Caco-2 (cell line): ENCODE measurements at regions of chr6 and their contacts with region 1.

Region 1: DNA sequence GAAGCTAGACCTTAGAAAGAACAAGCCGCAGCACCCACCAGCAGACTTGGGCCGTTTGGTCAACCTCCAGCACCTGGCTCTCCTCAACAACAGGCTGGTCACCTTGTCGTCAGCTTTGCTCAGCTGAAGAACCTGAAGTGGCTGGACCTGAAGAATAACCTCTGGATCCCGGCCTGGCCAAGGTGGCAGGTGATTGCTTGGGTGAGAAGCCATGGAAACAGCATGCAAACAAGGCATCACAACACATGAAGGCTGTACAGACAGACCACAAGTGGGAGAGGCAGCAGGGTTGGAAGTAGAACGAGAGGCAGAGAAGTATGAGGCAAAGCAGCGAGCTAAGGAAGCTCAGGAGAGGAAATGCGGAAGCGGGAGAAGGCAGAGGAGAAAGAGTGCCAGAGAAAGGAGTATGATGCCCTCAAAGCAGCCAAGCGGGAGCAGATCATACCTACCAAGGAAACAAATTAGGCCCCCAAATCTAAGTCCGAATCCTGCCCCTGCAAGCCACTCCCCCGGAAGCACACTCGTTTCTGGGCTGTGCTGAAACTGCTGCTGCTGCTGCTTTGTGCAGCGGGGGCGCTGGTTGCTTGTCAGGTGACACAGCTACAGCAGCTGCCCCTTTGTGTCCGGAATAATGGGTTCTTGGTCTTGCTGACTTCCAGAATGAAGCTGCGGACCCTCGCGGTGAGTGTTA is 121.6 kb upstream of the LGSN start:
- DNase-seq: peak; percentile 84 to 85
- H3K4me3 ChIP-seq: peak overlapping the region; percentile 81
- H3K4me3 Mint-ChIP-seq: peak overlapping the region; percentile 100
- H3K27ac Mint-ChIP-seq: peak overlapping the region; percentile 98
- H3K4me1 ChIP-seq: peaks cover 6% of the 10 kb centered on the region; the same call in 1 of the 2 replicates
- H3K4me1 Mint-ChIP-seq: peaks cover 10% of the 10 kb centered on the region
- H3K27me3 ChIP-seq: no peaks in the 10 kb centered on the region
- H3K27me3 Mint-ChIP-seq: no peaks in the 10 kb centered on the region
- CTCF ChIP-seq: peak; percentile 27 to 51

Region 2: GRCh38 chr6:63263444-63263843 is 178.0 kb before region 1 on chr6:
- CTCF ChIA-PET with region 1: no interaction called
- POLR2A ChIA-PET with region 1: no interaction called
- intact Hi-C with region 1: no loop called
- DNase-seq: no peak
- H3K4me3 ChIP-seq: no peak overlapping the region
- H3K4me3 Mint-ChIP-seq: no peak overlapping the region
- H3K27ac Mint-ChIP-seq: no peak overlapping the region
- H3K4me1 ChIP-seq: no peaks in the 10 kb centered on the region
- H3K4me1 Mint-ChIP-seq: no peaks in the 10 kb centered on the region
- H3K27me3 ChIP-seq: no peaks in the 10 kb centered on the region
- H3K27me3 Mint-ChIP-seq: no peaks in the 10 kb centered on the region
- CTCF ChIP-seq: no peak

Region 3: GRCh38 chr6:63352587-63353285 is 88.7 kb before region 1 on chr6:
- CTCF ChIA-PET with region 1: interaction called, 28 read pairs
- POLR2A ChIA-PET with region 1: interaction called, 11 read pairs
- intact Hi-C with region 1: loop called (anchors 1 kb)
- DNase-seq: peak; percentile 50 to 62
- H3K4me3 ChIP-seq: no peak overlapping the region
- H3K4me3 Mint-ChIP-seq: no peak overlapping the region
- H3K27ac Mint-ChIP-seq: no peak overlapping the region
- H3K4me1 ChIP-seq: peaks cover 37% of the 10 kb centered on the region
- H3K4me1 Mint-ChIP-seq: peaks cover 32% of the 10 kb centered on the region
- H3K27me3 ChIP-seq: no peaks in the 10 kb centered on the region
- H3K27me3 Mint-ChIP-seq: no peaks in the 10 kb centered on the region
- CTCF ChIP-seq: peak; percentile 44 to 73

Region 4: GRCh38 chr6:63418741-63419140 is 22.7 kb before region 1 on chr6:
- CTCF ChIA-PET with region 1: no interaction called
- POLR2A ChIA-PET with region 1: no interaction called
- intact Hi-C with region 1: no loop called
- DNase-seq: no peak
- H3K4me3 ChIP-seq: no peak overlapping the region
- H3K4me3 Mint-ChIP-seq: no peak overlapping the region
- H3K27ac Mint-ChIP-seq: no peak overlapping the region
- H3K4me1 ChIP-seq: no peaks in the 10 kb centered on the region
- H3K4me1 Mint-ChIP-seq: no peaks in the 10 kb centered on the region
- H3K27me3 ChIP-seq: no peaks in the 10 kb centered on the region
- H3K27me3 Mint-ChIP-seq: no peaks in the 10 kb centered on the region
- CTCF ChIP-seq: no peak

Region 5: DNA sequence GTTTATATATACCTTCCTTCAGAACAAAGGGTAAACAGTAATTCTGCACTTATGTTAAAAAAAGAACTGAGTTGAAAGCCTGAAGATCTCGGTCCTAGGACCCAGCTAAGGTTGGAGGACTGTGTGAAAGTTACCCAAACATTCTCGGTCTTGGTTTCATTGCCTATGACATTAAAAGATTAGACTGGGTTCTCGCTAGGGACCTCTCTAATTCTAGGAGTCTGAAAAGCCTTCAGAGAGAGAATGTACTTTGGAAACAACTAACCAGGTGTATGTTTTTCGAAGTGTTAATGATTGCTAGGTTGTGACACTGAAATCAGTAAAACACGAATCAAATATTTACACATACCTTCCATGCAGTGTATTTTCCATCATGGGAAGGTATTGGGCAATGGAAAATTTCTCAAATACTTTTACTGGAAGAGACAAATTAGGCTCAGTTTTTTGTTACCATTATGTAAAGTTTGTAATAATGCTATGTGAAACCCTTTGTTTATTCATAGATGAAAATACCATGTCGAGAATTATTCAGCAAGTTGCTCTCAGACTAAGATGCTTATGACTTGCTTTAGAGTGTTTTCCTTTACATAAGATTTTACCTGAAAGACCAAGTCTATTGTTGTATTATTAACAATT is 17.2 kb after region 1 on chr6:
- CTCF ChIA-PET with region 1: no interaction called
- POLR2A ChIA-PET with region 1: interaction called, 9 read pairs
- intact Hi-C with region 1: loop called (anchors 1 kb)
- DNase-seq: peak in 1 of 2 experiments; percentile 70
- H3K4me3 ChIP-seq: no peak overlapping the region
- H3K4me3 Mint-ChIP-seq: peak overlapping the region; percentile 52
- H3K27ac Mint-ChIP-seq: peak overlapping the region; percentile 66
- H3K4me1 ChIP-seq: peaks cover 36% of the 10 kb centered on the region
- H3K4me1 Mint-ChIP-seq: peaks cover 22% of the 10 kb centered on the region
- H3K27me3 ChIP-seq: no peaks in the 10 kb centered on the region
- H3K27me3 Mint-ChIP-seq: no peaks in the 10 kb centered on the region
- CTCF ChIP-seq: no peak

Region 6: DNA sequence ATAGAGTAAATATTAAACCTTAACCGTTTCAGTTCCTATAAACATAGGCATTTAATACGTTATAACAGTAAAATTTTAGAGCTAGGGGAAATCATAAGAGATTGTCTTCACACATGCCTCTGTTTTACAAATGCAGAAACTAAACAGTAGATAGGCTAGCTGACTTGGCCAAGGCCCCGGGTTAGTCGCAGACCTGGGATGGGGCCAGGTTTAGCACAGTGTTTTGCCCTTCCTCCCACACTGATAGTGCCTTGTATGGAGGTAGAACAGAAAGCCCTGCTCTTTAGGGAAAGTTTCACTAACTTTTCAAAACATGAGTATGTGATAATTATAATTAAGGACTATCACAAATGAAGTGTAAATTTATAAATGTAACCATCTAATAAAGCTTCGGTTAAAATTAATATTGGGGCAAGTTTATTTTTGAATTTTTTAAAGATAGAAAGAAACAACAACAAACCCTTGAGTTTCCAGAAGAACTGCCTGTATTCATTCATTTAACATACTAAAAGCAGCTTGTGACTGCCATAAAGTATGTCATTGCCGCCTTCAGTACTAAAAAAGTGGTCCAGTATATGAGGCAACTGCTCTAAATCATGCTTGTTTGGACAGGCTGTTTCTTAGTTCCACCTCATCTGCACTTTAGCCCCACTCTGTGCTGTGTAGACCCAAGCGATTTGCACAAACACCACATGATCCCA is 68.4 kb after region 1 on chr6:
- CTCF ChIA-PET with region 1: interaction called, 4 read pairs
- POLR2A ChIA-PET with region 1: interaction called, 7 read pairs
- intact Hi-C with region 1: loop called (anchors 1 kb)
- DNase-seq: peak; percentile 72 to 78
- H3K4me3 ChIP-seq: no peak overlapping the region
- H3K4me3 Mint-ChIP-seq: no peak overlapping the region
- H3K27ac Mint-ChIP-seq: no peak overlapping the region
- H3K4me1 ChIP-seq: peaks cover 33% of the 10 kb centered on the region
- H3K4me1 Mint-ChIP-seq: peaks cover 6% of the 10 kb centered on the region
- H3K27me3 ChIP-seq: no peaks in the 10 kb centered on the region
- H3K27me3 Mint-ChIP-seq: no peaks in the 10 kb centered on the region
- CTCF ChIP-seq: no peak

Region 7: DNA sequence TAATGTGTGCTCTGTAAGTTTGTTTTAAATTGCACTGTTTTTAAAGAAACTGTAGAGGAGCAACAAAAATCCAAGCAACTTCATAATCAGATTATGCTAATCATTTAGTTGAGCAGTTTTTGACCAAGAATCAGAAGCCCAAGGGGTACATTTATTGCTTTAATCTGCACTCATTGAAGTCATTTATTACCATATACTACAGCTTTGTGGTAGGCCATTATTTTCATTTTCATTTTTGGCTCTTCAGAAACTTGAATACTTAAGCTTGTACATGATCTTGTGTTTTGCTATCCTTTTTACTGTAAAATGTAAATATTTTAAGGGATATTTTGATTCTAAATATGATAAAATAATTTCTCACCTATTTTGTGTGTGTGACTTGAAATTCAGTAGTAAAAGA is 272.7 kb after region 1 on chr6:
- CTCF ChIA-PET with region 1: no interaction called
- POLR2A ChIA-PET with region 1: no interaction called
- intact Hi-C with region 1: no loop called
- DNase-seq: no peak
- H3K4me3 ChIP-seq: no peak overlapping the region
- H3K4me3 Mint-ChIP-seq: no peak overlapping the region
- H3K27ac Mint-ChIP-seq: no peak overlapping the region
- H3K4me1 ChIP-seq: no peaks in the 10 kb centered on the region
- H3K4me1 Mint-ChIP-seq: peaks cover 7% of the 10 kb centered on the region
- H3K27me3 ChIP-seq: no peaks in the 10 kb centered on the region
- H3K27me3 Mint-ChIP-seq: no peaks in the 10 kb centered on the region
- CTCF ChIP-seq: no peak

Region 8: DNA sequence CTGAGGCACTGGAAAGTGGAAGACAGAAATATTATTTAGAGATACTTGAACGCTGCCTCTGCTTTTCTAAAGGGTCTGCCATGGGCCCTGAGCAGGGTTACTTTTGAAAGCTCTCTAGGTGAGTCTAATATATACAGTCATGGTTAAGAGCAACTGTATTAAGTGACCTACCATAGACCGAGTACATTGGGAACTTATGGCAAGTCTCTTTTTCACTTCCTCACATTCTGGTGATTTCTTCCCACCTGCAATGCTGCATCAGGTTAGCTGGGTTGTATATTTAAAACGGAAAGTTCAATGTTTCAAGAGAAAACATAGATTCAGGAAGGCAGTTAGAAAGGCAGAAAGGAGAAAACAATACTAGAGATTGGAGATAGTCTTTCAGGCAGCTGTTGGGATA is 348.9 kb after region 1 on chr6:
- CTCF ChIA-PET with region 1: no interaction called
- POLR2A ChIA-PET with region 1: no interaction called
- intact Hi-C with region 1: no loop called
- DNase-seq: no peak
- H3K4me3 ChIP-seq: no peak overlapping the region
- H3K4me3 Mint-ChIP-seq: no peak overlapping the region
- H3K27ac Mint-ChIP-seq: no peak overlapping the region
- H3K4me1 ChIP-seq: no peaks in the 10 kb centered on the region
- H3K4me1 Mint-ChIP-seq: no peaks in the 10 kb centered on the region
- H3K27me3 ChIP-seq: no peaks in the 10 kb centered on the region
- H3K27me3 Mint-ChIP-seq: peaks cover 6% of the 10 kb centered on the region
- CTCF ChIP-seq: no peak